IMR-90 (cell line): ENCODE measurements at regions of chr17 and their contacts with region 1.

Region 1: DNA sequence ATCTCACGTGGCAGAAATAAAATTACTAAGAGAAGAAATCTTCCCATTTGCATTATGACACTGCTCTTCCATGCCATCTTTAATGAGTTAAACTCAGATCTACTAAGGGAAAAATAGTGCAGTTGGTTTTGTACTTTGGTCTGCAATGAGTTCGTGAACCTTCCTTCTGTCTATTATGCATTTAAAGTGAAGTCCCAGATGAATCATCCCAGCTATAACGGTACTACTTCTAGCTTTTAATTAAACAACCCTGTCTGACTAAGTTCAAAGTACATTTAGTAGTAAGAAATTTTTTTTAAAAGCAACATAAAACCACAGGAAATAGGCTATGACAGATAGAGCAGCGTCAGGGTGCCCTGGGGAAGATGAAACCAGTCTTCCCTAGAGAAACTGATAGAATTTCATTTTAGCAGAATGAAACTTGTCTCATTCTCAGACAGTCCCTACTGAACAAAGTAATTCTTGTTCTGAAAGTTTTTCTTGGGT is 1.8 kb downstream of the TMIGD1 start:
- DNase-seq: peak; percentile 92
- ATAC-seq: peak; percentile 85
- H3K4me3 ChIP-seq: no peak overlapping the region
- H3K27ac ChIP-seq: no peak overlapping the region
- H3K4me1 ChIP-seq: no peaks in the 10 kb centered on the region
- H3K27me3 ChIP-seq: no peaks in the 10 kb centered on the region
- CTCF ChIP-seq: no peak
- POLR2A ChIP-seq: no peak
- RAD21 ChIP-seq: no peak

Region 2: GRCh38 chr17:30279156-30279555 is 52.9 kb before region 1 on chr17:
- CTCF ChIA-PET with region 1: no interaction called
- POLR2A ChIA-PET with region 1: no interaction called
- dilution Hi-C with region 1: no loop called
- in situ Hi-C with region 1: no loop called
- intact Hi-C with region 1: no loop called
- DNase-seq: no peak
- ATAC-seq: no peak
- H3K4me3 ChIP-seq: no peak overlapping the region
- H3K27ac ChIP-seq: no peak overlapping the region
- H3K4me1 ChIP-seq: no peaks in the 10 kb centered on the region
- H3K27me3 ChIP-seq: no peaks in the 10 kb centered on the region
- CTCF ChIP-seq: no peak
- POLR2A ChIP-seq: no peak
- RAD21 ChIP-seq: no peak

Region 3: DNA sequence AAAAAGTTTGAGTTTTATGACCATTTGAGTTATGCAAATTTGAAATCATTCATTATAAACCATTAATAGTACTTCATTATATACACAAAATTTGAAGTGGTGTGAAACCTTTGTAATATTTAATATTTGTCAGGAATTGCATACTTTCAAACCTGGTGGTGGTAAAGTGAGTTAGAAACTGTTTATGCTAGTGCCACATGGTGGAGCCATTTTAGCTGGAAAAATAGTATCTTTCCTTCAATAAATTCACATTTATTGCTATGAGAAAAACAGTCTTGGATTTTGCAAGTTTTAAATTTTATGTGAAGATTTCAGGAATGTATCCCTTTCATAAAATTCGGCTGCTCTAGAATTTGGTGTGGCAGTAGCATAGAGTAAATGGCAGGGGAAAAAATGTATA is 33.1 kb before region 1 on chr17:
- CTCF ChIA-PET with region 1: no interaction called
- POLR2A ChIA-PET with region 1: no interaction called
- dilution Hi-C with region 1: no loop called
- in situ Hi-C with region 1: no loop called
- intact Hi-C with region 1: loop called (anchors 5 kb)
- DNase-seq: peak; percentile 21
- ATAC-seq: no peak; the same call in 1 of the 2 replicates
- H3K4me3 ChIP-seq: no peak overlapping the region
- H3K27ac ChIP-seq: no peak overlapping the region
- H3K4me1 ChIP-seq: no peaks in the 10 kb centered on the region
- H3K27me3 ChIP-seq: peaks cover 4% of the 10 kb centered on the region; the same call in 1 of the 2 replicates
- CTCF ChIP-seq: peak; percentile 53
- POLR2A ChIP-seq: no peak
- RAD21 ChIP-seq: peak; percentile 48